ENCODE measurements at regions of chr11 and their contacts with region 1.

Region 1: DNA sequence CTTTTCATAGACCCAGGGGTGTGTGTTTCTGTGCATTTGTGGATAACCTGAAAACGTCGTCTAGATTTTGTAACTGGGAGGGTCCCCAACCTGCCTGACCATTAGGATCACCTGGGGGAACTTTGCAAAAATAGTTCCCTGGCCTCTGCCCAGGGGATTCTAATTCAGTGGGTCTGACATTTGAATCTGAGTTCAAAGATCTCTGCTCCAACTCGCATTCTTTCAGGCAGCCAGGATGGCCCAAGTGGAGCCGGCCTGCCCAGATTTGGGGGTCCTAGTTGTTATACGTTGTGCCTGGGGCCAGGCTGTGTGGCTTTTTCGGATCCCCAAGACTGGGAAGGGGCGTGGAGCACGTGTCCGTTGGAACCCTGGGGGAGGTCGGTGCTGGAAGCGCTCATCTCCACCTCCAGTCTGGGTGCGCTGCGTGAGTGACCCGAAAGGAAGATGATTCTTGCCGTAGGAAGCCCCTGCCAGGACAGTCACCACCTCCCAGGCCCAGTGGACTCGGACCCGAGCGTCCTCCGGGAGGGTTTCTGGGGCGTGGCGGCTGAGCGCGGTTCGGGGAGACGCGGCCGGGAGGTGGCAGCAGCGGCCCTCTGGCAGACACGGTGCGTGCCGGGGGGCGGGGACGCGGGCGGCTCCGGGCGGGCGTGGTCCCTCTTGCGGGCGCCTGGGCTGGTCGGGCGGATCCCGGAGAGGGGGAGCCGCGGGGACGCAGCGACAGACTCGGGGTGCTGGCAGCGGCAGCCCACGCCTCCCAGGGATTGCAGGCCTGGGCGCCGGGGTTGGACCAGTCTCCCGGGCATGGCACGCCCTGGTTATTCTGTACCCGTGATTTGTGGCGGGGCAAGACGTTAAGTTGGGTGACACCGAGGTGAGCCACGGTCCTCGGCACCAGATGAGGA is 29.2 kb upstream of the PLET1 start:
- DNase-seq: peak; percentile 87
- H3K4me3 Mint-ChIP-seq: peak overlapping the region; percentile 71
- H3K27ac Mint-ChIP-seq: no peak overlapping the region
- H3K4me1 Mint-ChIP-seq: peaks cover 17% of the 10 kb centered on the region
- H3K27me3 Mint-ChIP-seq: no peaks in the 10 kb centered on the region

Region 2: DNA sequence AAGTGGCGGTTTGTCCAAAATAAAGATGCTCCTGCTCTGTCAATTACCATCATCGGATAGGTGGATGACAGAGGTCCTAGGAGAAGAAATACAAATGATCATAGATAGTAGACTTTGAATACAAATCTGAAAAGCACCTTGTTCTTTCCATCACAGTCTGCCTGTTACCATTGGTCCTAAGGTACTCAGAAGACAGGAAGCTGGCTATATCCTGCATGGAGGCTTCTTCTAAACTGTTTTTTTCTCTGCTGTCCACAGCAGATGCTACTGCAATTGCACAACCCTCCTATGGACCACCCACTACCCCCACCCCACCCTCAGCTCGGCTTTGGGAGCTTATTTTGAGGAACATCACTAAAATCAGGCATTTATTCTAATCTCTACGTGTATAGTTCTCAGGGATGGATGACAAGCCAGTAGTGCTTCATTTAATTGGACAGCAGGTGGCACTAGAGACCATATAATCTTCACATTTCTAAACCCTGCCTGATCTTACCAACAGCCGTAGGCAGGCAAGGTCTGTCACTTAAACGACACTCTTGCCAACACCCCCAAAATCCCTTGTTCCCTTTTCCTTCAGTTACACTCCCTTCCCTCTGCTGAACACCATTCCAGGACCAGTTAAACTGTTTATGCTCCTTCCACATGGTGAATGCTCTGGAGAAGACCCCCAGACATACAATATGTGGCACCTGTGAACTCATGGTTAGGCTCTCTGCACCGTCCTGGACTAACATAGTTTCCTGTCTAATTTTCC is 70.2 kb before region 1 on chr11:
- CTCF ChIA-PET with region 1: interaction called, 13 read pairs
- POLR2A ChIA-PET with region 1: no interaction called
- intact Hi-C with region 1: no loop called
- DNase-seq: peak; percentile 25
- H3K4me3 Mint-ChIP-seq: no peak overlapping the region
- H3K27ac Mint-ChIP-seq: no peak overlapping the region
- H3K4me1 Mint-ChIP-seq: no peaks in the 10 kb centered on the region
- H3K27me3 Mint-ChIP-seq: no peaks in the 10 kb centered on the region

Region 3: GRCh38 chr11:112355726-112356125 is 65.9 kb after region 1 on chr11:
- CTCF ChIA-PET with region 1: no interaction called
- POLR2A ChIA-PET with region 1: no interaction called
- intact Hi-C with region 1: no loop called
- DNase-seq: no peak
- H3K4me3 Mint-ChIP-seq: no peak overlapping the region
- H3K27ac Mint-ChIP-seq: no peak overlapping the region
- H3K4me1 Mint-ChIP-seq: peaks cover 2% of the 10 kb centered on the region
- H3K27me3 Mint-ChIP-seq: no peaks in the 10 kb centered on the region

Region 4: GRCh38 chr11:112392904-112393303 is 103.1 kb after region 1 on chr11:
- CTCF ChIA-PET with region 1: no interaction called
- POLR2A ChIA-PET with region 1: no interaction called
- intact Hi-C with region 1: no loop called
- DNase-seq: no peak
- H3K4me3 Mint-ChIP-seq: no peak overlapping the region
- H3K27ac Mint-ChIP-seq: no peak overlapping the region
- H3K4me1 Mint-ChIP-seq: no peaks in the 10 kb centered on the region
- H3K27me3 Mint-ChIP-seq: no peaks in the 10 kb centered on the region

Region 5: DNA sequence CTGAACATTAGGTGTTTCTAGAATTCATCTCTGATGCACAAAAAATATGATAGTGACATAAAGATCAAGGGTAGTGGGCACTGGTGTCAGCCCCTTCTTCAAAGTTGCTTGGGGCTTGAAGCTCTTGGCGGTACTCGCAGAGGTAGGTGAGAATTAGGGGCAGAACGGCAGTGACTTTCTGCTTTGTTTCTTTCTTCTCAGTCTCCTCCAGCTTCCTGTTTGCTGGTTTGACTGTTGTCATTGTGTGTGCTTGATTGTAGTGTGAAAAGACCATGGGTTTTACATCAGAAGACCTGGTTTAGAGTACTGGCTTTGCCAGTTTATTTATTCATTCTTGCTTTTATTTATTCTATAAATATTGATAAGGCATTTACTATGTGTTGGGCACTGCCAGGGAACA is 127.5 kb after region 1 on chr11:
- CTCF ChIA-PET with region 1: no interaction called
- POLR2A ChIA-PET with region 1: no interaction called
- intact Hi-C with region 1: loop called (anchors 5 kb)
- DNase-seq: no peak
- H3K4me3 Mint-ChIP-seq: no peak overlapping the region
- H3K27ac Mint-ChIP-seq: no peak overlapping the region
- H3K4me1 Mint-ChIP-seq: peaks cover 11% of the 10 kb centered on the region
- H3K27me3 Mint-ChIP-seq: peaks cover 2% of the 10 kb centered on the region

Region 6: GRCh38 chr11:112453601-112454577 is 164.0 kb after region 1 on chr11:
- CTCF ChIA-PET with region 1: interaction called, 9 read pairs
- POLR2A ChIA-PET with region 1: no interaction called
- intact Hi-C with region 1: loop called (anchors 1 kb)
- DNase-seq: peak; percentile 60
- H3K4me3 Mint-ChIP-seq: no peak overlapping the region
- H3K27ac Mint-ChIP-seq: no peak overlapping the region
- H3K4me1 Mint-ChIP-seq: no peaks in the 10 kb centered on the region
- H3K27me3 Mint-ChIP-seq: no peaks in the 10 kb centered on the region

Region 7: DNA sequence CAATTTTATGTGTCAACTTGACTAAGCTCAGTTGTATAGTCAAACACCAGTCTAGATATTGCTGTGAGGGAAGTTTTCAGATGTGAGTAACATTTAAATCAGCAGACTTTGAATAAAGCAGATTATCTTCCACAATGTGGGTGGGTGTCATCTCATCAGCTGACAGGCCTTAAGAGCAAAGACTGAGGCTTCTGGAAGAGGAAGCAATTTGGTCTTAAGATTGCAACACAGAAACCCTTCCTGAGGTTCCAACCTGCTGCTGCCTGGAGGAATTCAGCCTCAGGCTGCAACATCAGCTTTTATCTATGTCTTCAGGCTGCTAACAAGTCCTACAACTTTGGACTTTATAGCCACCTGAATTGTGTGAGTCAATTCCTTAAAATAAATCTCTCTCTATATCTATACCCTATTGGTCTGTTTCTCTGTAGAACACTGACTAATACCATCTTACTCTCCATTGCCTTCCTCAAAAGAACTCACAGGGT is 248.0 kb after region 1 on chr11:
- CTCF ChIA-PET with region 1: no interaction called
- POLR2A ChIA-PET with region 1: no interaction called
- intact Hi-C with region 1: loop called (anchors 5 kb)
- DNase-seq: no peak
- H3K4me3 Mint-ChIP-seq: no peak overlapping the region
- H3K27ac Mint-ChIP-seq: no peak overlapping the region
- H3K4me1 Mint-ChIP-seq: peaks cover 42% of the 10 kb centered on the region
- H3K27me3 Mint-ChIP-seq: peaks cover 5% of the 10 kb centered on the region

Region 8: DNA sequence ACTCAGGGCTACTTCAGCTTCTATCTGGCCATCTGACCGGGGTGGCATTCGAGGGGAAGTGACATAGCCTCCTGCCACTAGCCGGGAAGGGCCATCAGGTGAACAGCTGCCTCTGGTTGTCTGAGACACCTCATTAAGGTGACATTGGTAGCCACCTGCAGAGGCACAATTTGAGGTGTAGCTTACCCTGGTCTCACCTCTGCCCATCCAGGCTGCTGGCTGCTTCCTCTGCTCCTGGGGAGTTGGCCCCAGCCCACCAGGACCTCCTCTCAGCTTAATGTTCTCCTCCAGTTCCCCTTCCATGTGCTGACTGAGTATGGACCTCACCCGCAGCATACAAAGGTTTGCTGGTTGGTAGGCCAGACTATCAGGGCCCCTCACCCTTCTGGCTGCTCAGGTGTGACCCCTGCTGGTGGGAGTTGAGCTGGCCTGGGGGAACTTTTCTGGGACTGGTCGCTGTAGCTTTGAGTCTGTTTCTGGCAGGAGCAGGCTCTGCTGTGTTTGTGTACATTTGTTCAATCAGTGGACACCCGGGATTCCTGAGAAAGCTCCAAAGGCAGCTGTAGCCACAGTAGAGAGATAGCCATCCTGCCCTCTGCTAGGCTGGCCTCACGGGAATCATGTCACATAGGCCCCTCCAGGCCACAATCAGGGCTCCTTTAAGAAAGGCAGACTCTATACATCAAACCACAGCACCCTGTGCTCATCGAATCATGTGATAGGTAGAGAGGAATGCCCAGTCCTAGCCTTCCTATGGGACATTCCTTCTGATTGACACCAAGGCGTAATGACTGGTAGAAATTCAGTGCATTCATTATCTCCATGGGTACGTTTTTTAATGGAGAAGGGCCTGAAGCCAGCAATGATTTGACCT is 265.9 kb after region 1 on chr11:
- CTCF ChIA-PET with region 1: interaction called, 31 read pairs
- POLR2A ChIA-PET with region 1: no interaction called
- intact Hi-C with region 1: loop called (anchors 1 kb)
- DNase-seq: peak; percentile 82
- H3K4me3 Mint-ChIP-seq: no peak overlapping the region
- H3K27ac Mint-ChIP-seq: no peak overlapping the region
- H3K4me1 Mint-ChIP-seq: peaks cover 4% of the 10 kb centered on the region
- H3K27me3 Mint-ChIP-seq: peaks cover 1% of the 10 kb centered on the region

Region 9: GRCh38 chr11:113289431-113290187 is 999.8 kb after region 1 on chr11:
- CTCF ChIA-PET with region 1: interaction called, 10 read pairs
- POLR2A ChIA-PET with region 1: no interaction called
- intact Hi-C with region 1: loop called (anchors 2 kb)
- DNase-seq: peak; percentile 79
- H3K4me3 Mint-ChIP-seq: no peak overlapping the region
- H3K27ac Mint-ChIP-seq: no peak overlapping the region
- H3K4me1 Mint-ChIP-seq: no peaks in the 10 kb centered on the region
- H3K27me3 Mint-ChIP-seq: peaks cover 11% of the 10 kb centered on the region

Measured in activated CD4-positive, alpha-beta memory T cell treated with anti-CD3 and anti-CD28 coated beads for 36 hours (primary cell).